Activated CD4-positive, alpha-beta T cell treated with anti-CD3 and anti-CD28 coated beads for 36 hours (primary cell): ENCODE measurements at regions of chr4 and their contacts with region 1.

Region 1: DNA sequence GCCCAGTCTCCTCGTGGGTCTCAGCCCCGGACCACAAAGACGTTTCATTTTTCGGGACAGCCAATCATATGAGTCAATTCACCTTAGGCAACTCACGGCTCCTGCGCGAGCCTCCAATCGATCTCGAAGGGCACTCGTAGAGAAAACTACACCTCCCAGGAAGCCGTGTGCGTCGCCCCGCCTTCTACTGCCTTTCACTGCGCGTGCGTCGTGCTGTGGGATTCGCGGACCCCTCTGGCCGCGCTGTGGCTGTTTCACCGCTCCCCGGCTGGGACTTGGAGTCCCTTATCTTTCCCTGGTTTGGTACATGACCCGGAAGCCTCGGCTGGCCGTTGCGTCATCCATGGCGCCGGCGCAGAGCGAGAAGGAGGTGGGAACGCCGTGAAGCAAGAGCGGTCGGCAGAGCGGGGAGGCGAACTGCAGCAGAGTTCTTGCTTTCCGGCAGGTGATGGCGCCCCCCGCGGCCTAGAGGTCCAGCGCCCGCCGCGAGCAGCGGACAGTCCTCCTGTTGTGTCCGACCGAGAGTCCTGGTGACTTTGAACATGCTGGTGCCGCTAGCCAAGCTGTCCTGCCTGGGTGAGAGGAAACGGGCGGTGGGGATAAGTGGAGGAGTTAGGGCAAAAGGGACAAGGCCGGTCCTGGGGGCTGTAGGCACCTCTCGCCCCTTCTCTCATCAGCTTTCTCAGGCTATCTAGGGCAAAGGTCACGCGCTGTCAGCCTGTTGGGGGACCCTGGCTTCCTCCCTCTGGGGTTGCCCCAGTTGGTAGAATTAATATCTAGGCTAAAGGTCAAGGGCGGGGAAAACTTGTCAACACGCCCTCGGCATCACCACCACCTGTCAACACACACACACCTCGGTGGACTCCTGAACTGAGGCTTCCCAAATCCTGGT is at the start of gene ETFDH:
- DNase-seq: peak; percentile 98
- ATAC-seq: peak; percentile 88
- H3K4me3 Mint-ChIP-seq: peak within 1 kb of the TSS; percentile 97
- H3K27ac Mint-ChIP-seq: peak within 1 kb of the TSS; percentile 97
- H3K4me1 Mint-ChIP-seq: peaks cover 18% of the 10 kb centered on the region
- H3K27me3 Mint-ChIP-seq: no peaks in the 10 kb centered on the region
- total RNA-seq, gene ETFDH: 39.5 to 46.9 TPM

Region 2: GRCh38 chr4:158259955-158260575 is 412.1 kb before region 1 on chr4:
- CTCF ChIA-PET with region 1: no interaction called
- POLR2A ChIA-PET with region 1: no interaction called
- intact Hi-C with region 1: loop called in 1 of 2 experiments (anchors 5 kb)
- DNase-seq: no peak
- ATAC-seq: no peak
- H3K4me3 Mint-ChIP-seq: no peak overlapping the region
- H3K27ac Mint-ChIP-seq: no peak overlapping the region
- H3K4me1 Mint-ChIP-seq: no peaks in the 10 kb centered on the region
- H3K27me3 Mint-ChIP-seq: peaks cover 7% of the 10 kb centered on the region

Region 3: DNA sequence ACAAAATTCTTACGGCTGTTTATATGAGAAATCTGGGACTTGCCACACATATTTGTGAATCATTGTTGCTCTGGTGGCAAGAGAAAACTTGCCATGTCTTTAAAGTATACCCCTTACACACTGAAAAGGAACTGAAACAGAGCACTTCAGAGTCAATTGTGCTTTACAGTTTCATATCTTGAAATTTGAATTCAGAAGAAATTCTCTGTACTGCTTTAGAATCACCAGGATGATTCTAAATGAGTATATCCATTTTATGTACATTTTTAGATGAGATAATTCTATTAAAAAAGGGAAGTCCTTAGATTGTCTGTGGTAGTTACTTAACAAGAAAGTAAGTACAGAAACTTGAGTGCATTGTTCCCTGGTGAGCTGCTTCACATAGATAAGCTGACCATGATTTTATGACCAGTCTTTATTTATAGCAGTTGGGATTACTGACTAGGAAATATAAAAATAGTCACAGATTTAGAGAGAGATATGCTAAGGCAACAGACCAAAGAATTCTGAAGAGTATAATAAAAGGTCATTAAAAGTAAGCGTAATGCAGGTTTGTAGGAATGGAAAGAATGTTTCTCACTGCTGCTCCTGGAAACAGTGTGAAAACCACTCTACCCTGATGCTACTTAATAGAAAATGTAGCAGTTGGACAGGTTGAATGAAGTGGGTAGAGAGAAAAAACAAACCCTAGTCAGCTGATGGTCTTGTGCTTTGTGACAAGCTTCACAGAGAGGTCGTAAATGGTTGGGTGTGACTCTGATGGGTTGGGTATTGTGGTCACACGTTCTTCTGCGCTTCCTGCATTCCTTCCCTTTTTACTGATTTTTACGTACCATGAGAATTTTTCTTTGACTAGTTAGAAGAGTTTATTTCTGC is 137.7 kb after region 1 on chr4:
- CTCF ChIA-PET with region 1: interaction called, 3 read pairs
- POLR2A ChIA-PET with region 1: no interaction called
- intact Hi-C with region 1: loop called in 1 of 2 experiments (anchors 5 kb)
- DNase-seq: no peak
- ATAC-seq: peak; percentile 81
- H3K4me3 Mint-ChIP-seq: peak overlapping the region; percentile 28
- H3K27ac Mint-ChIP-seq: peak overlapping the region; percentile 71
- H3K4me1 Mint-ChIP-seq: peaks cover 35% of the 10 kb centered on the region
- H3K27me3 Mint-ChIP-seq: no peaks in the 10 kb centered on the region

Region 4: DNA sequence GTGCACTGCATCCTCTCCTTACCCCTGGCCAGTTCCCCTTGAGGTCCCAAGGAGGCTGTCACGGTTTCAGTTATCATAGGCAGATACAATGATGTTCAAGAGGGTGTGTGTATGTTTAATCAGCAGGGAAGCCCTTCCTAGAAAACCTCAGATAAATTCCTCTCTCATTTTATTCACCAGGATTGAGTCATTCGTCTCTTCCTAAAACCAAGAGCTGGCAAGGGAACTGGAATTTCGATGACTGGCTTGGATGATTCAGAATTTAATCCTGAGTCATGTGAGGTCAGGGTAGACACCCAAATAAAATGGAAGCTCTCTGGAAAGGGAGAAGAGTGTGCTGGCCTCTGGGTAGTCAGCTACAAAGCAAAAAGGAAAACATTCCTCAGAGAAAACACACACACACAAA is 324.5 kb after region 1 on chr4:
- CTCF ChIA-PET with region 1: no interaction called
- POLR2A ChIA-PET with region 1: no interaction called
- intact Hi-C with region 1: no loop called
- DNase-seq: no peak
- ATAC-seq: no peak
- H3K4me3 Mint-ChIP-seq: no peak overlapping the region
- H3K27ac Mint-ChIP-seq: no peak overlapping the region
- H3K4me1 Mint-ChIP-seq: no peaks in the 10 kb centered on the region
- H3K27me3 Mint-ChIP-seq: peaks cover 3% of the 10 kb centered on the region

Region 5: DNA sequence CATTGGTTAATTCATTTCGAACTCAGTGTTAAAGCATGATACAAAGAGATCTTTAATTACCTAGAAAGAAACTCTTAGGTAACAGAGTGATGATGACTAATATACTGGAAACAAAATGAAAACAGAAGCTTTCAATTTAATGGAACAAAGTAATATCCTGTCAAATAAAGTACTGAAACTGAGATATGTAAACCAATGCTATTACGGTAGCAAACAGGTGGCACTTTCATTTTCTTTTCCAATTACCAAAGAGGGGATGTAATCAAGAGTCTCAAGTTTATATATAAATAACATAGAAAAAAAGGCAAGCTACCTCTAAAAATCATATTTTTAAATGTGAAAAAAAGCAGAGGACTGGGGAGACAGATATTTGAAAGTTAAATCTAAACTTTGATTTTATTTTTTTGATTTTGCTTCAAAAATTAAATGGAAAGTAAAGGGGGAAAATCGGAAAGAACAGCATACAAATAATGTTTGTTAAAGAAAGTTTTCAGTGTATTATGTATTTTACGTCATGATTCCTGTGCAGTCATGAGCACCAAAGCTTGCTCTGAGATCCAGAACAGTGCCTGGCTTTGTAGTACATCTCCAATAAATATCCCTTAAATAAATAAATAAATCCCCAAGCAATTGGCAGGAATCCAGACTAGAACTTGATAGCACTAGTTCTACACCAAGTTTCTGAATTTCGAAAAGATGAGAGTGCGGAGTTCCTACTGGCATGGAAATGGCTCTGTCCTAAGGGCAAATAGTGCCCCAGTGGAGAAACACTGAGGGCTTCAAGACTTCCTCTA is 405.7 kb after region 1 on chr4:
- CTCF ChIA-PET with region 1: no interaction called
- POLR2A ChIA-PET with region 1: no interaction called
- intact Hi-C with region 1: loop called in 1 of 2 experiments (anchors 5 kb)
- DNase-seq: no peak
- ATAC-seq: peak; percentile 84
- H3K4me3 Mint-ChIP-seq: peak overlapping the region; percentile 21
- H3K27ac Mint-ChIP-seq: peak overlapping the region; percentile 47
- H3K4me1 Mint-ChIP-seq: peaks cover 25% of the 10 kb centered on the region
- H3K27me3 Mint-ChIP-seq: no peaks in the 10 kb centered on the region

Region 6: DNA sequence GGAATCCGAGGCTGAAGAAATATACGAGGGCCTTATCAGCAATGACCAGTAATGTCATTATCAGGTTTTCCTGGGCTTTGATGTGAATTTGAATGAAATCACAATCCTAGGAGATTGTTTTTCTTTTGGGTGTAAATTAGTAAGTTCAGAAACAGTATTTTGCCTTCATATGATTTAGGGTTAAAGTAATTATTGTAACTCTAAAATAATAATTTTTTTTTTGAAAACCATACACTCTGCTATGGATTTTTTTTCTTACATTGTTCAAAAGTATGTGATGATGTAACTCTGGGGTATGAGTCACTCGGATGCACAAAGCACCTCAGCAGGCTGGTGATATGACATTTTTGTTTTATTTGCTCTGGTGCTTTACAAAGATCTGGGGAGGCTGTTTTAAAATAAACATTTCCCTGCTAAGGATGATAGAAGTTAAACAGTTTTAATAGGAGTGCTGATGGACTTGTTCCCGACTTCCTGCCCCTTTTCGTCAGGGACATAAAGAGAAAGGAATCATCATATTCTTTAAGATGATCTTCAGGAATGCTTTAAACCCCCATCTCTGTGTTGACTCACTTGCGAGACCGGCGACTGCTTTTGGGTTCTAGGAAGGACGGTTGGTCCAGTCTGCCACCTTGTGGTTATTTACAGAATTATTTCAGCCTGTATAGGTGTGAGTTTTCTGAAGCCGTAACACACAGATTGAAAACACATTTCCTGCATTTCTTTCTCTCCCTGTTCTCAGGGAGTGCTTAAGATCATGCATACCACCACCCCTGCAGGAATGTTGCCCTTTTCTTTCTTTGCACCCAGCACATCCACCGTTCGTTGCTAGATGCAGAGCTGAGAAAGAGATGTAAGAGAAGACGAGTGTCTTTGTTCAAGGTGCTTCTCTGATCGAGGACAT is 503.2 kb after region 1 on chr4:
- CTCF ChIA-PET with region 1: no interaction called
- POLR2A ChIA-PET with region 1: no interaction called
- intact Hi-C with region 1: loop called in 1 of 2 experiments (anchors 5 kb)
- DNase-seq: peak; percentile 71
- ATAC-seq: peak; percentile 69
- H3K4me3 Mint-ChIP-seq: no peak overlapping the region
- H3K27ac Mint-ChIP-seq: no peak overlapping the region
- H3K4me1 Mint-ChIP-seq: peaks cover 68% of the 10 kb centered on the region
- H3K27me3 Mint-ChIP-seq: no peaks in the 10 kb centered on the region